ENCODE measurements at regions of chr6 and their contacts with region 1.

Region 1: DNA sequence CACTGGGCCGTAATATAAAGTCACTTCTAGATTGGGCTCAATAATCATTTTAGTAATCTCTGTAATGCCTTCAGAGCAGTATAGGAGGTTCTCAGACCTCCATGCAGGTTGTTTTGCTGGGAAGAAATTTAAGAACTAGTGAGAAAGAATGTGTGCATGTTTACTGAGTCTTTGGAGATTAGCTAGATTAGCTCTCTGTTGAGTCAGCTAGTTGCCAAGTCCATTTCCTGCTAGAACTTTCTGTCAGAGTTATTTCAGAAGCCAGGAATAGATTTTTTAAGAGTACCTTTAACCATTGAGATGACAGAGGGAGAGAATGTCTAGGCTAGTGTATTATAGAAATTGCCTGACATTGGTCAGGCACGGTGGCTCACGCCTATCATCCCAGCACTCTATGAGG is 33.3 kb downstream of the ORC3 start:
- DNase-seq: no peak
- H3K4me3 ChIP-seq: no peak overlapping the region
- CTCF ChIP-seq: no peak
- POLR2A ChIP-seq: no peak

Region 2: DNA sequence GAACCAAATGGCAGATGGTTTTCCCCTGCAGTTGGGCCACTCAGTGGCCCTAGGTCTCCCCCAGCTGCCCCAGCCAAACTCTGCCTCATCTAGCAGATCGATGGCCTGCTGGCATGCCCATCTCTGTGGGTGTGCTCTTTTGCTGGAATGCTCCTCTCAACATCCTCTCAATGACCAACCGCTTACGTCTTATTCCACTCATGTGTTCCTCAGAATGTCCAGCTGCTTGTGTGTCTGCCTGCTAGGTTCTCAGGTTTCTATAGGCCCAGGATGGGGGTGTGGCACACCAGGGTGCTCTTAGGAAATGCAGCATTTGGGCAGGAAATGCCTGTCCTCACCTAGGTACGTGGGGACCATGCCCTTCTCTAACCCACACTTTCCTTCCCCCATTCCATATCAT is 1470.7 kb before region 1 on chr6:
- intact Hi-C with region 1: loop called (anchors 10 kb)
- DNase-seq: no peak
- H3K4me3 ChIP-seq: no peak overlapping the region
- CTCF ChIP-seq: no peak
- POLR2A ChIP-seq: no peak

Region 3: GRCh38 chr6:86357877-86358276 is 1265.4 kb before region 1 on chr6:
- intact Hi-C with region 1: no loop called
- DNase-seq: no peak
- H3K4me3 ChIP-seq: no peak overlapping the region
- CTCF ChIP-seq: no peak
- POLR2A ChIP-seq: no peak

Region 4: DNA sequence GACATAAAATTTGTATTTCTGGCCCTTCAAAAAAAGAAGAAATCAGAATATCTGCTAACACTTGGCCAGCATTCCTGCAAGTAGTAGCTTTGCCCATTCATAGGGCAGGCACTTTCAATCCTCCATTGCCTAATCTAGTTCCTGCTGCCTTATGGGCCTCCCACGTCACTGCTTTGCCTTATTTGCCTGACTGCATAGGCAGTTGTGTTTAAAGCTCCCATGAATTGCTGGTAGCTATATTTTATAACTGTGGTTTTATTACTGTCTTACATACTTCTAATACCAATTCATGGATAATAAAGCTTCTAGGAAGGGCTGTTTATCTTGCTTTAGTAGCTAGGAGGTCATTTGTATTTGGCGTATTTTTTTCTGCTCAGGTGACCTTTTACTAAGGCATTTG is 158.2 kb before region 1 on chr6:
- intact Hi-C with region 1: no loop called
- DNase-seq: no peak
- H3K4me3 ChIP-seq: no peak overlapping the region
- CTCF ChIP-seq: no peak
- POLR2A ChIP-seq: no peak